ENCODE measurements at regions of chr6 and their contacts with region 1.

Region 1: GRCh38 chr6:35202066-35202546 is 11.7 kb upstream of the SCUBE3 start:
- DNase-seq: no peak
- H3K4me3 Mint-ChIP-seq: no peak overlapping the region
- H3K27ac Mint-ChIP-seq: no peak overlapping the region
- H3K4me1 Mint-ChIP-seq: peaks cover 4% of the 10 kb centered on the region
- H3K27me3 Mint-ChIP-seq: peaks cover 29% of the 10 kb centered on the region
- CTCF ChIP-seq: no peak

Region 2: DNA sequence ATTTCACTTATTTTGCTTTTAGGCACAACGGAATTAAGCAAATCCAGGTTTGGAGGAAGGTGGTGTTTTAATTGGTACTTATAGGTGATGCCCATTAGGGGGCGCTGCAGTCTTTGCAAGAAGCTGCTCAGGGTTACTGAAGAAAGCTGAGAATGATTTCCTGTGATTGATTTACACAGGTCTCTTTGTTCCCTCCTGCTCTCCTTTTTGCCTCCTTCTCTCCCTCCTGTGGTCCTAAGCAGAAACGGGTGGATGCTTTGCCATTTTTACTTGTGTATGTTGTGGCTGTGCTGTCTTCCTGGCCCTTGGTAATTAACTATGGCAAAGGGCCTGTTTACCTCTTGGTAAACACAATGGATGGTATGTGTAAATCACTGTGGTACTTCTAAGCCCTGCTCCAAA is 215.3 kb before region 1 on chr6:
- CTCF ChIA-PET with region 1: interaction called, 11 read pairs
- POLR2A ChIA-PET with region 1: no interaction called
- intact Hi-C with region 1: loop called (anchors 1 kb)
- DNase-seq: peak; percentile 78
- H3K4me3 Mint-ChIP-seq: no peak overlapping the region
- H3K27ac Mint-ChIP-seq: no peak overlapping the region
- H3K4me1 Mint-ChIP-seq: no peaks in the 10 kb centered on the region
- H3K27me3 Mint-ChIP-seq: no peaks in the 10 kb centered on the region
- CTCF ChIP-seq: peak; percentile 84

Region 3: GRCh38 chr6:35146453-35146852 is 55.7 kb before region 1 on chr6:
- CTCF ChIA-PET with region 1: interaction called, 171 read pairs
- POLR2A ChIA-PET with region 1: interaction called, 12 read pairs
- intact Hi-C with region 1: loop called (anchors 1 kb)
- DNase-seq: peak; percentile 65
- H3K4me3 Mint-ChIP-seq: no peak overlapping the region
- H3K27ac Mint-ChIP-seq: no peak overlapping the region
- H3K4me1 Mint-ChIP-seq: peaks cover 17% of the 10 kb centered on the region
- H3K27me3 Mint-ChIP-seq: no peaks in the 10 kb centered on the region
- CTCF ChIP-seq: peak; percentile 49

Region 4: DNA sequence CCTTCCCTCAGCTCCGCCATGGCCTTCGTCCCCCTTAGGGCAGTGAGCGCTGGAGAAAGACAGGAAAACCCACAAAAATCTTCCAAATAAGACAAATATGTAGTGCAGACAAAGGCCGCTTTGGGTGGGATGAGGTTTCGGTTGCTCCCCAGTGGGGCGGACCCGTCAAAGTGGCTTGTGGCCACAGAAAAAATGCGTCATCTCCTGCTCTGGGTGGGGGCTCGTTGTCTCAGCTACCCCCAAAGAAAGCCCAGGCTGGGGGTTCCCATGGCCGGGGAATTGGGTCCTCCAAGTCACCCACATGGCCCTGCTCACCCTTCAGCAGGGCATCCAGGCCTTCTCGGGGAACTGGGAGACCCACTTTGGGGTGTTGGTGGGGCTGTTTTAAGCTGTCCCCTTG is 10.2 kb before region 1 on chr6:
- CTCF ChIA-PET with region 1: interaction called, 27 read pairs
- POLR2A ChIA-PET with region 1: interaction called, 4 read pairs
- intact Hi-C with region 1: no loop called
- DNase-seq: no peak
- H3K4me3 Mint-ChIP-seq: no peak overlapping the region
- H3K27ac Mint-ChIP-seq: no peak overlapping the region
- H3K4me1 Mint-ChIP-seq: peaks cover 3% of the 10 kb centered on the region
- H3K27me3 Mint-ChIP-seq: no peaks in the 10 kb centered on the region
- CTCF ChIP-seq: no peak

Region 5: GRCh38 chr6:35218021-35218420 is 15.9 kb after region 1 on chr6:
- CTCF ChIA-PET with region 1: interaction called, 15 read pairs
- POLR2A ChIA-PET with region 1: no interaction called
- intact Hi-C with region 1: no loop called
- DNase-seq: no peak
- H3K4me3 Mint-ChIP-seq: no peak overlapping the region
- H3K27ac Mint-ChIP-seq: no peak overlapping the region
- H3K4me1 Mint-ChIP-seq: peaks cover 4% of the 10 kb centered on the region
- H3K27me3 Mint-ChIP-seq: peaks cover 19% of the 10 kb centered on the region
- CTCF ChIP-seq: no peak